B cell (primary cell): ENCODE measurements at regions of chr11 and their contacts with region 1.

Region 1: DNA sequence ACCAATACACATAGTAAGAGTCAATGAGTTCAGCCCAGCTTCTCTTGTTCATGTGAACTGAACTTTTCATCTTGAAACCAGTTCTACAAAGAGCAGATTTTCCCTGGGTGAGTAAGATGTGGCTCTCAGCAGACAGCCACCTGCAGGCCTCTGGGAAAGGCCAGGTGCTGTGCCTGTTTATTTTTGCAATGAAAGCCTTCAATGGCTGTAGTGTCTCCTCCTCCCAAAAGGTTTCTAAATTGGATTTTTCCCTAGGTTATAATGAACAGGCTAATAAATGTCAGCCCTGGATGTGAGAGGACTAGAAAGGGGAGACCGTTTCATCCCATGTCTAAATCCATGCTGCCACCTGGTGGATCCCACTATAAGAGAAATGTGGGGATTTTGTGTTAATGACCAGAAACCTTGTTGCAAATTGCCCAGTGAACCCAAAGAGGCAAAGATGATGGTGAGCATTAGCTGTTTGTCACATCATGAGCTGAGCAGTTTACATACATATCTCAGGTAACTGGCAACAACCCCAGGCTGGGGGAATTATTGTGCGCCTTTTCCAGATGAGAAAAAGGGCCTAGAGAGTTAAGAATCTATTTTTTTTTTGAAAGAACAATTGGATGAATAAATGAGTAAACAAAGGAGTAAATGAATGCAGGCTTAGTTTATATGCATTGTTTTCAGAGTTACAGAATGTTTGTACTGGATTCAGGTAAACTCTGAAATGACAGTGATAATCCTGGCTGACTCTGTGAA is 12.7 kb downstream of the C11orf91 start:
- DNase-seq: no peak
- ATAC-seq: no peak
- H3K4me3 ChIP-seq: no peak overlapping the region
- H3K4me3 Mint-ChIP-seq: no peak overlapping the region
- H3K27ac ChIP-seq: no peak overlapping the region
- H3K27ac Mint-ChIP-seq: no peak overlapping the region
- H3K4me1 ChIP-seq: no peaks in the 10 kb centered on the region
- H3K4me1 Mint-ChIP-seq: no peaks in the 10 kb centered on the region
- H3K27me3 ChIP-seq: peaks cover 0 to 11% (median 0%) of the 10 kb centered on the region in 4 experiments
- H3K27me3 Mint-ChIP-seq: peaks cover 32% of the 10 kb centered on the region
- CTCF ChIP-seq: peak; percentile 15

Region 2: GRCh38 chr11:33292311-33292710 is 395.6 kb before region 1 on chr11:
- CTCF ChIA-PET with region 1: no interaction called
- POLR2A ChIA-PET with region 1: interaction called, 12 read pairs
- intact Hi-C with region 1: no loop called
- DNase-seq: no peak
- ATAC-seq: no peak
- H3K4me3 ChIP-seq: no peak overlapping the region
- H3K4me3 Mint-ChIP-seq: no peak overlapping the region
- H3K27ac ChIP-seq: no peak overlapping the region
- H3K27ac Mint-ChIP-seq: no peak overlapping the region
- H3K4me1 ChIP-seq: no peaks in the 10 kb centered on the region
- H3K4me1 Mint-ChIP-seq: peaks cover 40% of the 10 kb centered on the region
- H3K27me3 ChIP-seq: no peaks in the 10 kb centered on the region
- H3K27me3 Mint-ChIP-seq: no peaks in the 10 kb centered on the region
- CTCF ChIP-seq: no peak

Region 3: GRCh38 chr11:33452836-33453624 is 234.9 kb before region 1 on chr11:
- CTCF ChIA-PET with region 1: no interaction called
- POLR2A ChIA-PET with region 1: no interaction called
- intact Hi-C with region 1: no loop called
- DNase-seq: no peak
- ATAC-seq: no peak
- H3K4me3 ChIP-seq: no peak overlapping the region
- H3K4me3 Mint-ChIP-seq: no peak overlapping the region
- H3K27ac ChIP-seq: no peak overlapping the region
- H3K27ac Mint-ChIP-seq: no peak overlapping the region
- H3K4me1 ChIP-seq: no peaks in the 10 kb centered on the region
- H3K4me1 Mint-ChIP-seq: no peaks in the 10 kb centered on the region
- H3K27me3 ChIP-seq: no peaks in the 10 kb centered on the region
- H3K27me3 Mint-ChIP-seq: peaks cover 28% of the 10 kb centered on the region
- CTCF ChIP-seq: no peak

Region 4: GRCh38 chr11:33670250-33671011 is 17.5 kb before region 1 on chr11:
- CTCF ChIA-PET with region 1: no interaction called
- POLR2A ChIA-PET with region 1: no interaction called
- intact Hi-C with region 1: no loop called
- DNase-seq: no peak
- ATAC-seq: no peak
- H3K4me3 ChIP-seq: no peak overlapping the region
- H3K4me3 Mint-ChIP-seq: no peak overlapping the region
- H3K27ac ChIP-seq: no peak overlapping the region
- H3K27ac Mint-ChIP-seq: no peak overlapping the region
- H3K4me1 ChIP-seq: no peaks in the 10 kb centered on the region
- H3K4me1 Mint-ChIP-seq: no peaks in the 10 kb centered on the region
- H3K27me3 ChIP-seq: peaks cover 0 to 5% (median 0%) of the 10 kb centered on the region in 4 experiments
- H3K27me3 Mint-ChIP-seq: peaks cover 4% of the 10 kb centered on the region
- CTCF ChIP-seq: no peak

Region 5: DNA sequence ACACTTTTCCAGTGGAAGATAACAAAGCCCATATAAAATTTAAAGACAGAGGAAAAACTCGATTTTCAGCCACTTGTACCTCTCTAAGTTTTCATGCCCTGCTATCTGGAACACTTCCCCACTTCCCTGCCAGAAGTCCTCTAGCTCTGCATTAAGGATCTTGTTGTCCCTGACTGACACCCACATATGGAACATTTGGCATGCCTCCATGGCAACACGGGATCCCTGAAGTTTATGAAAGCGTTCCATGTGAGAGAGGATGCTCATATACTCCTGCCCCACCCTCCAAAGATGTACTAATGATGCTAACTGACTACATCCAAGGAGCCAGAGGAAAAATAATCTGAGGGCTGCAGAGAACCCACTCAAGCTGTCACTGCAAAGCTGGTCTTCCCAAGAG is 21.6 kb after region 1 on chr11:
- CTCF ChIA-PET with region 1: no interaction called
- POLR2A ChIA-PET with region 1: no interaction called
- intact Hi-C with region 1: no loop called
- DNase-seq: no peak
- ATAC-seq: no peak
- H3K4me3 ChIP-seq: no peak overlapping the region
- H3K4me3 Mint-ChIP-seq: no peak overlapping the region
- H3K27ac ChIP-seq: no peak overlapping the region
- H3K27ac Mint-ChIP-seq: no peak overlapping the region
- H3K4me1 ChIP-seq: no peaks in the 10 kb centered on the region
- H3K4me1 Mint-ChIP-seq: no peaks in the 10 kb centered on the region
- H3K27me3 ChIP-seq: no peaks in the 10 kb centered on the region
- H3K27me3 Mint-ChIP-seq: no peaks in the 10 kb centered on the region
- CTCF ChIP-seq: no peak

Region 6: GRCh38 chr11:33857933-33858371 is 170.0 kb after region 1 on chr11:
- CTCF ChIA-PET with region 1: no interaction called
- POLR2A ChIA-PET with region 1: no interaction called
- intact Hi-C with region 1: no loop called
- DNase-seq: peak; percentile 86
- ATAC-seq: peak; percentile 96
- H3K4me3 ChIP-seq: no peak overlapping the region
- H3K4me3 Mint-ChIP-seq: no peak overlapping the region
- H3K27ac ChIP-seq: no peak overlapping the region
- H3K27ac Mint-ChIP-seq: no peak overlapping the region
- H3K4me1 ChIP-seq: no peaks in the 10 kb centered on the region
- H3K4me1 Mint-ChIP-seq: peaks cover 6% of the 10 kb centered on the region
- H3K27me3 ChIP-seq: no peaks in the 10 kb centered on the region
- H3K27me3 Mint-ChIP-seq: no peaks in the 10 kb centered on the region
- CTCF ChIP-seq: peak; percentile 93